A549 (cell line): ENCODE measurements at regions of chr22 and their contacts with region 1.

Region 1: GRCh38 chr22:24189249-24190158 is 8.2 kb downstream of the SUSD2 start:
- DNase-seq: peak; percentile 70 to 84
- ATAC-seq: peak; percentile 87 to 93
- H3K4me3 ChIP-seq: no peak overlapping the region
- H3K27ac ChIP-seq: peak overlapping the region; percentile 93 to 96
- H3K4me1 ChIP-seq: peaks cover 28% of the 10 kb centered on the region
- CTCF ChIP-seq: peak; percentile 80
- EP300 ChIP-seq: peak in 1 of 2 experiments; percentile 48; a peak in 1 of 5 replicates
- POLR2A ChIP-seq: no peak
- RAD21 ChIP-seq: peak; percentile 98

Region 2: DNA sequence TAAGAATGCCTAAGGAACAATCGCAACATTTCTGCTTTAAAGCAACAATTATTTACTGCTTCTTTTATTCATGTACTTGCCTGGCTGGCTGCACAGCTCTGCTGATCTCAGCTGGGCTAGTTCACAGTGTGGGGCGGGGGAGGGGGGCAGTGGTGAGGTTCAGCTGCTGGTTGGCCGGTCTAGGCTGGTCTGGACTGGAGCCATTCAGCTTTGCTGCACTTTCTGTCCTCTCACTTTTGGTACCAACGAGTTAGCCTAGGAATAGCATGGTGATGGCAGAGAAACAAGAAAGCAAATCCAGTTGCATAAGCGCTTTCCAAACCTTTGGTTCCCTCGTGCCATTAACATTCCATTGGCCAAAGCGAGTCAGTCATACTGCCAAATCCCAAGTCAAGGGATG is 311.3 kb before region 1 on chr22:
- CTCF ChIA-PET with region 1: no interaction called
- POLR2A ChIA-PET with region 1: no interaction called
- DNase-seq: no peak
- ATAC-seq: no peak
- H3K4me3 ChIP-seq: no peak overlapping the region
- H3K27ac ChIP-seq: no peak overlapping the region
- H3K4me1 ChIP-seq: no peaks in the 10 kb centered on the region
- CTCF ChIP-seq: no peak
- EP300 ChIP-seq: no peak
- POLR2A ChIP-seq: no peak
- RAD21 ChIP-seq: no peak

Region 3: DNA sequence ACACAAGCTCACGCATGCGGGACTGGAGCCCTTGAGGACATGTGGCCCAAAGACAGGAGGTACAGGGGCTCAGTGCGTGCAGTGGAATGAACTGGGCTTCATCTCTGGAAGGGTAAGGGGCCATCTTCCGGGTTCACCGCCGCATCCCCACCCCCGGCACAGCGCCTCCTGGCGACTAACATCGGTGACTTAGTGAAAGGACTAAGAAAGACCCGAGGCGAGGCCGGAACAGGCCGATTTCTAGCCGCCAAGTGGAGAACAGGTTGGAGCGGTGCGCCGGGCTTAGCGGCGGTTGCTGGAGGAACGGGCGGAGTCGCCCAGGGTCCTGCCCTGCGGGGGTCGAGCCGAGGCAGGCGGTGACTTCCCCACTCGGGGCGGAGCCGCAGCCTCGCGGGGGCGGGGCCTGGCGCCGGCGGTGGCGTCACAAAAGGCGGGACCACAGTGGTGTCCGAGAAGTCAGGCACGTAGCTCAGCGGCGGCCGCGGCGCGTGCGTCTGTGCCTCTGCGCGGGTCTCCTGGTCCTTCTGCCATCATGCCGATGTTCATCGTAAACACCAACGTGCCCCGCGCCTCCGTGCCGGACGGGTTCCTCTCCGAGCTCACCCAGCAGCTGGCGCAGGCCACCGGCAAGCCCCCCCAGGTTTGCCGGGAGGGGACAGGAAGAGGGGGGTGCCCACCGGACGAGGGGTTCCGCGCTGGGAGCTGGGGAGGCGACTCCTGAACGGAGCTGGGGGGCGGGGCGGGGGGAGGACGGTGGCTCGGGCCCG is 295.4 kb before region 1 on chr22 and contains the start of gene MIF:
- CTCF ChIA-PET with region 1: no interaction called
- POLR2A ChIA-PET with region 1: no interaction called
- DNase-seq: peak; percentile 73 to 93
- ATAC-seq: peak; percentile 84 to 88
- H3K4me3 ChIP-seq: peak within 1 kb of the TSS; percentile 81
- H3K27ac ChIP-seq: peak within 1 kb of the TSS; percentile 98 to 99
- H3K4me1 ChIP-seq: peaks cover 29% of the 10 kb centered on the region
- CTCF ChIP-seq: peak; percentile 60
- EP300 ChIP-seq: no peak
- POLR2A ChIP-seq: peak; percentile 91
- RAD21 ChIP-seq: 0 out of 5 replicates have a peak, but pooled peaks of 1 of the 2 experiments have one; percentile 14
- polyA plus RNA-seq, gene MIF: 173 and 197 TPM in 2 replicates

Region 4: GRCh38 chr22:24037851-24038765 is 151.4 kb before region 1 on chr22:
- CTCF ChIA-PET with region 1: no interaction called
- POLR2A ChIA-PET with region 1: no interaction called
- DNase-seq: no peak
- ATAC-seq: no peak
- H3K4me3 ChIP-seq: no peak overlapping the region
- H3K27ac ChIP-seq: no peak overlapping the region
- H3K4me1 ChIP-seq: peaks cover 10% of the 10 kb centered on the region; the same call in 2 of the 3 replicates
- CTCF ChIP-seq: no peak
- EP300 ChIP-seq: no peak
- POLR2A ChIP-seq: no peak
- RAD21 ChIP-seq: no peak

Region 5: GRCh38 chr22:24156913-24157821 is 32.3 kb before region 1 on chr22:
- CTCF ChIA-PET with region 1: interaction called, 16 read pairs
- POLR2A ChIA-PET with region 1: no interaction called
- DNase-seq: peak; percentile 82 to 86
- ATAC-seq: peak; percentile 91 to 94
- H3K4me3 ChIP-seq: peak overlapping the region; percentile 83
- H3K27ac ChIP-seq: peak overlapping the region; percentile 79 to 96
- H3K4me1 ChIP-seq: peaks cover 14% of the 10 kb centered on the region
- CTCF ChIP-seq: peak; percentile 57
- EP300 ChIP-seq: no peak
- POLR2A ChIP-seq: no peak
- RAD21 ChIP-seq: peak in 1 of 2 experiments; percentile 26; a peak in 1 of 5 replicates

Region 6: GRCh38 chr22:24200616-24201212 is 11.2 kb after region 1 on chr22:
- CTCF ChIA-PET with region 1: interaction called, 52 read pairs
- POLR2A ChIA-PET with region 1: no interaction called
- DNase-seq: peak; percentile 60 to 84
- ATAC-seq: peak; percentile 88 to 96
- H3K4me3 ChIP-seq: no peak overlapping the region
- H3K27ac ChIP-seq: peak overlapping the region; percentile 91 to 100
- H3K4me1 ChIP-seq: peaks cover 73% of the 10 kb centered on the region
- CTCF ChIP-seq: no peak
- EP300 ChIP-seq: peak; percentile 53 to 92; a peak in 3 of 5 replicates
- POLR2A ChIP-seq: no peak
- RAD21 ChIP-seq: 0 out of 5 replicates have a peak, but pooled peaks of 1 of the 2 experiments have one; percentile 20

Region 7: GRCh38 chr22:24214467-24215285 is 25.2 kb after region 1 on chr22:
- CTCF ChIA-PET with region 1: interaction called, 35 read pairs
- POLR2A ChIA-PET with region 1: no interaction called
- DNase-seq: no peak
- ATAC-seq: peak; percentile 61 to 64; a peak in 3 of 6 replicates
- H3K4me3 ChIP-seq: no peak overlapping the region
- H3K27ac ChIP-seq: peak overlapping the region; percentile 62 to 81
- H3K4me1 ChIP-seq: peaks cover 12% of the 10 kb centered on the region; the same call in 2 of the 3 replicates
- CTCF ChIP-seq: no peak
- EP300 ChIP-seq: no peak
- POLR2A ChIP-seq: no peak
- RAD21 ChIP-seq: no peak

Region 8: GRCh38 chr22:24230911-24231656 is 41.6 kb after region 1 on chr22:
- CTCF ChIA-PET with region 1: interaction called, 27 read pairs
- POLR2A ChIA-PET with region 1: no interaction called
- DNase-seq: no peak
- ATAC-seq: peak in 1 of 2 experiments; percentile 78; a peak in 3 of 6 replicates
- H3K4me3 ChIP-seq: no peak overlapping the region
- H3K27ac ChIP-seq: peak overlapping the region; percentile 15 to 67; a peak in 3 of 6 replicates
- H3K4me1 ChIP-seq: no peaks in the 10 kb centered on the region; the same call in 2 of the 3 replicates
- CTCF ChIP-seq: peak; percentile 24; the same call in 1 of the 3 replicates
- EP300 ChIP-seq: no peak
- POLR2A ChIP-seq: no peak
- RAD21 ChIP-seq: no peak; a peak in 1 of 5 replicates